ENCODE measurements at regions of chr5 and their contacts with region 1.

Region 1: GRCh38 chr5:140302786-140303639 is at the start of gene PFDN1:
- DNase-seq: peak; percentile 96
- ATAC-seq: peak; percentile 99
- H3K4me3 Mint-ChIP-seq: peak within 1 kb of the TSS; percentile 91
- H3K27ac Mint-ChIP-seq: peak within 1 kb of the TSS; percentile 91
- H3K4me1 Mint-ChIP-seq: peaks cover 29% of the 10 kb centered on the region
- H3K27me3 Mint-ChIP-seq: peaks cover 4% of the 10 kb centered on the region
- total RNA-seq, gene PFDN1: 52.6 to 63.2 TPM

Region 2: GRCh38 chr5:140113699-140114263 is 189.2 kb before region 1 on chr5 and contains the start of gene PURA:
- CTCF ChIA-PET with region 1: no interaction called
- POLR2A ChIA-PET with region 1: no interaction called
- intact Hi-C with region 1: loop called in 1 of 2 experiments (anchors 2 kb)
- DNase-seq: peak; percentile 98
- ATAC-seq: peak; percentile 92
- H3K4me3 Mint-ChIP-seq: peak within 1 kb of the TSS; percentile 89
- H3K27ac Mint-ChIP-seq: peak within 1 kb of the TSS; percentile 84
- H3K4me1 Mint-ChIP-seq: peaks cover 65% of the 10 kb centered on the region
- H3K27me3 Mint-ChIP-seq: peaks cover 3% of the 10 kb centered on the region
- total RNA-seq, gene PURA: 9.5 to 10.7 TPM

Region 3: GRCh38 chr5:140251527-140251973 is 51.5 kb before region 1 on chr5:
- CTCF ChIA-PET with region 1: interaction called, 10 read pairs
- POLR2A ChIA-PET with region 1: no interaction called
- intact Hi-C with region 1: loop called (anchors 1 kb)
- DNase-seq: peak; percentile 85
- ATAC-seq: peak; percentile 94
- H3K4me3 Mint-ChIP-seq: peak overlapping the region; percentile 18
- H3K27ac Mint-ChIP-seq: peak overlapping the region; percentile 90
- H3K4me1 Mint-ChIP-seq: peaks cover 42% of the 10 kb centered on the region
- H3K27me3 Mint-ChIP-seq: no peaks in the 10 kb centered on the region

Region 4: DNA sequence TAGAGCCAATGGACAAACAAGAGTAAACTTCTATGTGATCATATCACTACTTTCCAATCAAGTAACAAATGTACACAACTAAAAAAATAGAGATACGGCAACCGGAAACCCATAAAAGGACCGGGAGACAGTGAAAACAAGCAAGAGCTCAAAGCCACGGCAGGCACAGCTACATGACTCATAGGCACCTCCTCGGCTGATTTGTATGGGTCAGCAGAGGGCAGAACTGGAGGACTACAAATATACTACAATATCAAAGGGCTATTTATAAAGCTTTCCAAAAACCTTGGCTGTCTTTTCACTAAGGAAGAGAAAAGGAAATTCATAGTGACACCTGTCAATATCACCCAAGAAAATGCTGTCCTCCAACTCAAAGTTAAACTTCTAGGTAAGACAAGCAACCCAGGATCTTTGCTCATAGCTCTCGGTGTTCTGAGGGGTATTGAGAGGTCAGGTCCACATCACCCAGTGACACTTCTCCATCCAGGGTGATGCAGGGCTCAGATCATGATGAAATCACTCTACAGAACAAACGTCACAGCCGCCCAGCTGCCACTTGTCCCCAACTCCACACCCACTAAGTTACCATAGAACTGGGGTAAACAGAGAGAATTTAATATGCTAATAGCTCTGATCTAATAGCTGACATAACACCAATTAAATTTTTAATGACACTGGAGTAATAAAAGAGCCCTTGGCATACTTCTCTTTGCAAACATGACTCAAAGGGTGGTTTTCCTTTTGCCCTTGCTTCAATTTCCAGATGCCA is 41.4 kb before region 1 on chr5:
- CTCF ChIA-PET with region 1: interaction called, 10 read pairs
- POLR2A ChIA-PET with region 1: no interaction called
- intact Hi-C with region 1: no loop called
- DNase-seq: peak; percentile 41
- ATAC-seq: peak; percentile 79
- H3K4me3 Mint-ChIP-seq: no peak overlapping the region
- H3K27ac Mint-ChIP-seq: peak overlapping the region; percentile 8
- H3K4me1 Mint-ChIP-seq: peaks cover 58% of the 10 kb centered on the region
- H3K27me3 Mint-ChIP-seq: no peaks in the 10 kb centered on the region

Region 5: DNA sequence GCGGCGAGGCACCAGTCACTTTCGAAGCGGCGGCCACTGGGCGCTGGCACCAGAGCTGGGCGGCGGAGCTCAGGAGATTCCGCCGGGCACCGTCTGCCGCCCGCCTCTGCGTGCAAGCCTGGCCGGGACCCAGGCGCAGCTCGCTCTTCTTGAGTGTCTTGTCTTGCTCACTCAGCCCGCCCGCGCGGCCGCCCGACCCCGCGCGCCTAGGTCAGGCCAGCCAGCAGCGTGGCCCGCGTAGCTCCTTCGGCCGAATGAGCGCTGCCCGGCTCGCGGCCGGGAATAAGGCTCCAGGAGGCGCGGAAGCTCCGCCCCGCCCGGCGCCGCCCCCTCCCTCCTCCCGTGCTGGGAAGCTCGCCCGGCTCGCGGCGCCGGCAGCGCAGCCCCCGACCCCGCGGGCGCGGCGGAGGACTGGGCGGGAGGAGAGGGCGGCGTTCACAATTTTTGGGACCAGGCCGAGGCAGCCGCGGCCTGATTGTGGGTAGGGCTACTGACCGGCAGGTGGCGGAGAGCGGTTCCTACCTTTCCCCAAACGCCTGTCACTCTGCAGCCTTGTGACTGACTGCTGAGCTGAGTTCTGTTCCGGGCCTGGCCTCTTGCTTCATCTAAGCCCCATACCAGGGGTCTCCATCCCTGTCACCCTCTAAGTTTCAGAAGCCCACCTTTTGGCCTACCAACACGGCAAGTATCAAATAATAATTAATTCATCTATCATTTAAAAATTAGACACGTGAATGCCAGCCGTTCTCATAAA is 43.5 kb after region 1 on chr5 and contains the start of gene HBEGF:
- CTCF ChIA-PET with region 1: interaction called, 14 read pairs
- POLR2A ChIA-PET with region 1: interaction called, 3 read pairs
- intact Hi-C with region 1: loop called (anchors 1 to 2 kb)
- DNase-seq: peak; percentile 74
- ATAC-seq: peak; percentile 46
- H3K4me3 Mint-ChIP-seq: peak within 1 kb of the TSS; percentile 80
- H3K27ac Mint-ChIP-seq: no peak within 1 kb of the TSS
- H3K4me1 Mint-ChIP-seq: peaks cover 44% of the 10 kb centered on the region
- H3K27me3 Mint-ChIP-seq: peaks cover 2% of the 10 kb centered on the region
- total RNA-seq, gene HBEGF: 11.8 to 12.5 TPM

Region 6: DNA sequence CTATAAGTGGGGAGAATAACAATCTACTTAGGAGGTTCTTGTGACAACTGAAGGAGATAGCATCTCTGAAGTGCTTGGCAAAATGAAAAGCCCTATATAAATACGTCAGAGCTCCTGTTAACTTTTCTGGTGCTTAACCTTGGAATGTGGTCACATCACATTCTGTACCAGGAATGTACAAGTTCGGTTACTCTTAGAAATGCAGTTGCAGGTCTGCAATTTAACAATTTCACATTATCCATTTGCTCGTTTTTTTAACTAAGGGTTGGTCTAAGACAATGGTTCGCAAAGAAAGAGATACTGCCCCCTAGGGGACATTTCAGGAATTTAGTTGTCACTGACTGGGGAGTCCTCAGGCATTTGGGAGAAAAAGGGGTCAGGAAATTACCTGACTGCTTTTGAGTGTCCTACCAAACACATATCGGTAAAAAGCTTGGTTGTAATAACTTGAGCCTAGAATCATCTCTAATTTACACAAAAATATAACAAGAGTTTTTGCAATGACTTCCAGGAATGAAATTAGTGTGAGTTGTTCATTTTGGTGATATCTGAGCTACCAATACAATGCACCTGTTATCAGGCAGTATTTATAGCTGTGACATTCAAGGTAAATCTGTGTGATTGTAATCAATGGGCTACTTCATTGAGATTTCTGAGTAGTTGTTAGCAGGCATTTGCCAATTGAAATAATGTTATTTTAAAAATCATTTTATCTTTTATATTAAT is 48.8 kb after region 1 on chr5:
- CTCF ChIA-PET with region 1: interaction called, 14 read pairs
- POLR2A ChIA-PET with region 1: no interaction called
- intact Hi-C with region 1: loop called in 1 of 2 experiments (anchors 1 kb)
- DNase-seq: peak; percentile 65
- ATAC-seq: peak; percentile 90
- H3K4me3 Mint-ChIP-seq: no peak overlapping the region
- H3K27ac Mint-ChIP-seq: no peak overlapping the region
- H3K4me1 Mint-ChIP-seq: peaks cover 7% of the 10 kb centered on the region
- H3K27me3 Mint-ChIP-seq: no peaks in the 10 kb centered on the region

Region 7: GRCh38 chr5:140575309-140575708 is 272.3 kb after region 1 on chr5:
- CTCF ChIA-PET with region 1: no interaction called
- POLR2A ChIA-PET with region 1: no interaction called
- intact Hi-C with region 1: no loop called
- DNase-seq: peak; percentile 54
- ATAC-seq: no peak
- H3K4me3 Mint-ChIP-seq: no peak overlapping the region
- H3K27ac Mint-ChIP-seq: no peak overlapping the region
- H3K4me1 Mint-ChIP-seq: peaks cover under 1% of the 10 kb centered on the region
- H3K27me3 Mint-ChIP-seq: no peaks in the 10 kb centered on the region

Measured in activated CD4-positive, alpha-beta T cell treated with anti-CD3 and anti-CD28 coated beads for 36 hours (primary cell).